Right ventricle myocardium superior (tissue), 1 donor: ENCODE measurements at regions of chr9 and their contacts with region 1.

Region 1: GRCh38 chr9:27489087-27489876 is 34.8 kb upstream of the IFNK start:
- DNase-seq: no peak
- ATAC-seq: no peak

Region 2: GRCh38 chr9:27427273-27427645 is 62.0 kb before region 1 on chr9:
- intact Hi-C with region 1: loop called (anchors 10 kb)
- DNase-seq: no peak
- ATAC-seq: no peak

Region 3: GRCh38 chr9:28127101-28127500 is 637.8 kb after region 1 on chr9:
- intact Hi-C with region 1: no loop called
- DNase-seq: no peak
- ATAC-seq: no peak